Right cardiac atrium (tissue), 5 donors: ENCODE measurements at regions of chr3 and their contacts with region 1.

Region 1: DNA sequence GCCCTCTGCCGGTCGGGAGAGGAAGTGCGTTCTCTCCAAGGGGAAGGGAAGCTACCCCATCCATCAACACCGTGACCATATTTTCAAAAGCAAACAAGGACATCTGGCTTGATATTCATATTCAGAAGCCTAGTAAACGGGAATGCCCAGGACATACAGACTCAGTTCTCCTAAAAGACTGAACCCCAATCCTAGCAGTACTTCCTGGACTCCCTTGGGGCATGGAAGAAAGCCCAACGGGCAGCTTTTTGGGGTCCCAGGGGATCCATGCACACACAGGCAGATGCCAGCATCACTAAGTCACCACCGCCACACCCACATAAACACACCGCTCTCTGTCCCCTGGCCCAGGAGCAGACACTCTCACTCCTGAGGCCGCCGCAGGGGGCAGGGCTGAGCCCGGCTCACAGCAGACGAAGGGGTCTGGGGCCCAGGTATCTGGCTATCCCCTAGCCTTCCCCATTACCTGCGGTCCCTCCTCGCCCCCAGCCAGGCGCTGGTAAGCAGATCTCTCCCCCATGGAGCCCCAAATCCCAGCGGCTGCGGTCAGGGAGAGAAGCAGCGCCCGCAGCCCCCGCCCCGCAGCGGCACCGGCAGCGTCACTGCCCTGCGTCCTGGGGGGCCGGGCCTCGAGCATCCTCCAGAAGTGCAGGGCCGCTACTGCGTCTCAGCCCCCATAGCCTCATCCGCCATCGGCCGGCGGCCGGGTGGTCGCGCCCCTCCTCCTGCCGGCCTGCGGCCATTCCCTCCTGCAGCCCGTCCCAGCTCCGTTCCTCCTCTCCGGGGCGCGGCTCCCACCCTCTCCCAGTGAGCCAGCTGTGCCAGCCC is 13.4 kb downstream of the TNK2 start:
- DNase-seq: peak; percentile 45 to 83 (median 79)
- ATAC-seq: peak; percentile 9 to 40
- H3K4me3 ChIP-seq: peak overlapping the region; percentile 65
- H3K27ac ChIP-seq: peak overlapping the region; percentile 68
- H3K4me1 ChIP-seq: peaks cover 15% of the 10 kb centered on the region
- H3K27me3 ChIP-seq: no peaks in the 10 kb centered on the region

Region 2: DNA sequence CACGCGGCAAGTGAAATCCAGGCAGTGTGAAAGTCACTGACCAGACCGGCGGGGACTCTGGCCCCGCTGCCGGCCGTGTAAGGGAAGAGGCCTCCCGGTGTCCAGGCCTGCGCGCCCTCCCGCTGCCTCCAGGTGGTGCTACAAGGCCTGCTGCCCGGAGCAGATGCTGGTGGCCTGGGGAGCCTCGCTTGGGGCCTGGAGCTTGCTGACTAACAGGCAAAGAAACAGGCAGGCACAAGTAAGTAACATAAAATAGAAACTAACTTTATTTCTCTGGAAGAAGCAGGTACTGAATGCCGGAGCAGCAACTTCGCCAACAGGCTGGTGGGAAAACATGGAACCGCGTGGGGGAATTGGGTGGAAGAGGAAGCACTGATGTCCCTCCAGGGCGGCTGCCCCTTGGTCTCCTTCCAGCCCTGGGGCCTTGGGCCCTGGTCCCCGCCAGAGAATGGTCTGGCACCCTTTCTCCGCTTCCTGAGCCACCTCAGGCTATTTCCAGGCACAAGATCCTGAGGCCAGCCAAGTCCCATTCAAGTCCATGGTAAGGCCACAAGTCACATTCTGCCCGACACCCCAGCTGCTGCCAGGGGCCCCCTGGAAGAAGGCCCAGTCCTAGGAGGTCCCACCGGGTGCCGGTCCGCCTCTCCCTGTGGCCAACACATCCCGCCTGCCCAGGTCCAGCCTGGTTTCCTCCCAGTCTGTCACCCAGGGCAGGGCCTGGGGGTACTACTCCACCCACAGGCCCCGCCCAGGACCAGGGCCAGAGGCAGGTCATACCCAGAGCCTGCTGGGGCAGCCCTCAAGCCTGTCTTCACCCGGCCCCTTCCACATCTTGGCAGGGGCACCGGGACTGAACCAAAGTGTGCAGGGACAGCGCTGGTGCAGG is 31.6 kb before region 1 on chr3:
- intact Hi-C with region 1: loop called (anchors 1 to 5 kb)
- DNase-seq: peak; percentile 92 to 97 (median 96)
- ATAC-seq: peak; percentile 95
- H3K4me3 ChIP-seq: no peak overlapping the region
- H3K27ac ChIP-seq: peak overlapping the region; percentile 6
- H3K4me1 ChIP-seq: no peaks in the 10 kb centered on the region
- H3K27me3 ChIP-seq: no peaks in the 10 kb centered on the region

Region 3: DNA sequence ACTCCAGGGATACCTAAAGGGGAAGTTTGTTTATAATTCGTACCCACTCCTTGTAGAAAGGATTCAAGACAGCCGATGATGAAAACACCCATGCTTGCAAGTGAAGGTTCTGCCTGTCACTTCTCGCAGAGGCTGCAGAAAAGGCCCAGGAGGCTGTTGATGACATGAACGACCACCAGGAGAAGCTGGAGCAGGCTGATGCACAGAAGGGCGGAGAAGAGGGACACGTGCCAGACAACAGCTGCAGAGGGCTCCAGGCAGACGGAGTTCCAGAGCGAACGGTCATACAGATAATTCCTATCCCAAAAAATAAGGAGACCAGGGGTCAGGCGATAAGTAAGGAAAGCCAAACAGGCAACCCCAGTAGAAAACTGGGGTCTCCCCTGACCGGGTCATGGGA is 428.7 kb after region 1 on chr3:
- intact Hi-C with region 1: no loop called
- DNase-seq: peak; percentile 44 to 64 (median 48)
- ATAC-seq: no peak
- H3K4me3 ChIP-seq: no peak overlapping the region
- H3K27ac ChIP-seq: no peak overlapping the region
- H3K4me1 ChIP-seq: no peaks in the 10 kb centered on the region
- H3K27me3 ChIP-seq: no peaks in the 10 kb centered on the region

Region 4: DNA sequence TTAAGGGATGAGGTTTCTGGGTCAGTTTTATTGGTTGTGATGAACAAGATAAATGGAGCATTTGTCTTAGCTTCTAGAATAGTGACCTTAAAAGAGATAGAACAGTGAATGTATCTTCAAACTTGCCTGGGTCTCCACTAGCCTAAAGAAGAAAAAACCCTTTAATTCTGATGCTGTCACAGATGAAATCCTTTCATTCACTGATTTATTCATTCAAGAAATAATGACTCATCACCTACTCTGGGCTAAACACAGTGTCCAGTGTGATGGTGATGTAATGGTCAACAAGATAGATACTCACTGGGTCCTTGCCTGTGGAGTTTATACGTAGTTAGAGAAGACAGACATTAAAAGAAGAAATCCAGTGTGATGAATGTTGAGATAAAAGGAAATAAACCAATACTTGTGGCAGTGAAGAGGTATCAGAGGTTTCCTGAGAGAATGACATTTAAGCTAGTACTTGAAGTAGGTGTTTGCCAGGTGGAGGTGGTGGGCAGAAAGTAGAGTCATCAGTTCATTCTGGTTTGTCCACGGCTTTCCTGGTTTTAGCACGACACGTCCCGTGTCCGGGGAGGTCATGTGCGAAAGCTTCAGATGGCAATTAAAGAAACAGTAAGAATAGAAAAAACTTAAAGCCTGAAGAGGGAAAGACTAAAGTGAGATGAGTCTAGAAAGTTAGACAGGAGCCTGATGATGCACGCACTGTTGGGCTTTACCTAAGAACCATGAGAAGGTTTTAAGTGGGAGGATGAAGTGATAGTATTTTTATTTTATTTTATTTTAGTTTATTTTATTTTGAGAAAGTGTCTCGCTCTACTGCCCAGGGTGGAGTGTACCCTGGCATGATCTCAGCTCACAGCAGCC is 863.1 kb after region 1 on chr3:
- intact Hi-C with region 1: no loop called
- DNase-seq: no peak
- ATAC-seq: peak in 1 of 2 donors; percentile 71
- H3K4me3 ChIP-seq: no peak overlapping the region
- H3K27ac ChIP-seq: no peak overlapping the region
- H3K4me1 ChIP-seq: peaks cover 3% of the 10 kb centered on the region
- H3K27me3 ChIP-seq: no peaks in the 10 kb centered on the region